Transverse colon (tissue), 4 donors: ENCODE measurements at regions of chr1 and their contacts with region 1.

Region 1: DNA sequence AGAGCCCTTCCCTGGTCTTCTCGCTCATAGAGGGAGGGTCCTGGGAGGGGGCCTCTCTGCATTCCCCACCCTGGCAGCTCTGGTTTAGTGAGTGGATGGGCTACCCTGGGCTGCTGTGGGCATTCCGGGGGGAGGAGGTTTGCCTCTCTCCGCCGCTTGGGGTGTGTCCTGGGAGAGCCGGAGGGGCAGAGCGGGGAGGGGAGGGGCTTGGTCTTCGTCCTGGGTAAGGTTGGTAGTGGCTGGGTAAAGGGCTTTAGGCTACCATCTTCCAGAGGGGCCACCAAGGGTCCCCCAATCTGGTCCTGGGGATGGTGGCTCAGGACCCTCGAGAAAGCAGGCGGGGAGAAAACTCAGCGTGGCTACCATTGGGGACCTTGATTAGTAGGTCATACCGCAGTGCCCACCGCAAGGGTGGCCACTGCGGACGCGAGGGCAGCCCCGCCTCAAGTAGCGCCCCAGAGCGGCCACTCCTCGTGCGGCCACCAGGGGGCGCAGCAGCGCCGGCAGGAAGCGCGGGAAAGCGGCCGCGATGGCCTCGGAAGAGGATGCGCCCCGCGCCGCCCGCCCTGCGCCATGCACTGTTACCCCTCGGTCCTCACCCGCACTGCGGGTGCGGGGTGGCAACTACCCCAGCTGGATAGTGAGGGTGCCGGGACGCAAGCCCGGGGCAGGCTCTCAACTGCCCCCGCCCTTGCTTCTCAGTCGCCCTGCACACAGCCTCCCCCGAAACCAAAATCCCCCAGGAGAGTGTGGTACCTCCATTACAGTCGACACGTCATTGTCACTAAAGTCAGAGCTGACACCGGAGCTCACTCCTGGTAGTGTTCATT is 44.1 kb upstream of the SLC25A33 start:
- DNase-seq: peak; percentile 58
- H3K4me3 ChIP-seq: peak overlapping the region in 1 of 4 donors; percentile 35
- H3K27ac ChIP-seq: no peak overlapping the region
- H3K4me1 ChIP-seq: peaks cover 3 to 13% (median 6%) of the 10 kb centered on the region in 4 donors
- H3K27me3 ChIP-seq: no peaks in the 10 kb centered on the region
- CTCF ChIP-seq: peak; percentile 90 to 99 (median 99)
- EP300 ChIP-seq: no peak
- POLR2A ChIP-seq: no peak

Region 2: GRCh38 chr1:9110669-9111356 is 384.3 kb before region 1 on chr1:
- in situ Hi-C with region 1: loop called in 1 of 4 experiments (anchors 25 kb)
- intact Hi-C with region 1: no loop called
- DNase-seq: peak; percentile 88
- H3K4me3 ChIP-seq: no peak overlapping the region
- H3K27ac ChIP-seq: no peak overlapping the region
- H3K4me1 ChIP-seq: peaks cover 0 to 13% (median 4%) of the 10 kb centered on the region in 4 donors
- H3K27me3 ChIP-seq: no peaks in the 10 kb centered on the region
- CTCF ChIP-seq: peak; percentile 89 to 94 (median 91)
- EP300 ChIP-seq: no peak
- POLR2A ChIP-seq: no peak

Region 3: GRCh38 chr1:9286556-9286955 is 208.6 kb before region 1 on chr1:
- in situ Hi-C with region 1: loop called in 1 of 4 experiments (anchors 10 kb)
- intact Hi-C with region 1: loop called (anchors 2 kb)
- DNase-seq: no peak
- H3K4me3 ChIP-seq: no peak overlapping the region
- H3K27ac ChIP-seq: no peak overlapping the region
- H3K4me1 ChIP-seq: peaks cover 3 to 18% (median 10%) of the 10 kb centered on the region in 4 donors
- H3K27me3 ChIP-seq: no peaks in the 10 kb centered on the region
- CTCF ChIP-seq: no peak
- EP300 ChIP-seq: no peak
- POLR2A ChIP-seq: no peak